HCT116 (cell line): ENCODE measurements at regions of chr16 and their contacts with region 1.

Region 1: DNA sequence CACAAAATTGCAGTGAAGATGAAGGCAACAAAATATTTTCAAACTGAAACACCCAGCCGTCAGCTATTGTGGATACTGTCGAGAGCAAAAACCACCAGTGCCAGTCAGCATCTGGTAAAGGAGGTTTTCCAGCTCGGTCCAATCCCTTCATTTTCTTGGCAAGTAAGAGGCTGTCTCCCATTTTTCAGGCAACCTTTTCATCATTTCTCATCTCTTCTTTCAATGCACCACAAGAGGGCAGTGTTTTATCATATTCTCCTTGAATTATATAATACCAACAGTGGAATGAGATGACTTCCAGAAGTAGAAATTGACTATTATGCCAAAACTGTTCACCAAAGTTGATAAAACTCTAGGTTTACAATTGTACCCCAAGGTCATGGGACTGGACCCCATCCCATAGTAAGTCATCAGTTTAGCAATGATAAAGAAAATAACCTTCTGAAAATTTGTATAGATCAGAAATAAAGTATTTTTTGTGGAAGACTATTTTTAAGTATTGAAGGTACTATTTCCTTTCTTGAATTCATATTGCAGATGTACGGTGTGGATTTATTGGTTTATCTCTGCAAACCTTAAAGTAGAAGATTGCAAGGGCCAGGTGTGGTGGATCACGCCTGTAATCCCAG is 16.8 kb downstream of the NQO1 start:
- DNase-seq: peak; percentile 52
- ATAC-seq: peak; percentile 30
- H3K4me3 ChIP-seq: no peak overlapping the region
- H3K27ac ChIP-seq: peak overlapping the region; percentile 60
- H3K4me1 ChIP-seq: peaks cover 45 to 52% of the 10 kb centered on the region in 2 experiments
- H3K27me3 ChIP-seq: no peaks in the 10 kb centered on the region
- CTCF ChIP-seq: peak; percentile 45 to 75 (median 67); a peak in 4 of 6 replicates
- POLR2A ChIP-seq: no peak
- RAD21 ChIP-seq: peak; percentile 83

Region 2: GRCh38 chr16:69688589-69688988 is 21.0 kb before region 1 on chr16:
- CTCF ChIA-PET with region 1: no interaction called
- POLR2A ChIA-PET with region 1: no interaction called
- RAD21 ChIA-PET with region 1: no interaction called
- intact Hi-C with region 1: no loop called
- DNase-seq: no peak
- ATAC-seq: no peak
- H3K4me3 ChIP-seq: no peak overlapping the region
- H3K27ac ChIP-seq: no peak overlapping the region
- H3K4me1 ChIP-seq: peaks cover 0 to 4% of the 10 kb centered on the region in 2 experiments; a peak in 2 of 4 replicates
- H3K27me3 ChIP-seq: no peaks in the 10 kb centered on the region
- CTCF ChIP-seq: no peak
- POLR2A ChIP-seq: no peak
- RAD21 ChIP-seq: no peak

Region 3: GRCh38 chr16:69754469-69755310 is 45.1 kb after region 1 on chr16 and contains the start of gene NOB1:
- CTCF ChIA-PET with region 1: interaction called, 19 read pairs
- POLR2A ChIA-PET with region 1: no interaction called
- RAD21 ChIA-PET with region 1: no interaction called
- intact Hi-C with region 1: loop called (anchors 1 kb)
- DNase-seq: peak; percentile 93
- ATAC-seq: peak; percentile 96
- H3K4me3 ChIP-seq: peak within 1 kb of the TSS; percentile 91 to 92
- H3K27ac ChIP-seq: peak within 1 kb of the TSS; percentile 76
- H3K4me1 ChIP-seq: peaks cover 7 to 14% of the 10 kb centered on the region in 2 experiments
- H3K27me3 ChIP-seq: no peaks in the 10 kb centered on the region
- CTCF ChIP-seq: peak; percentile 88 to 97 (median 94)
- POLR2A ChIP-seq: peak; percentile 76
- RAD21 ChIP-seq: peak; percentile 98
- total RNA-seq, gene NOB1: 172 TPM

Region 4: DNA sequence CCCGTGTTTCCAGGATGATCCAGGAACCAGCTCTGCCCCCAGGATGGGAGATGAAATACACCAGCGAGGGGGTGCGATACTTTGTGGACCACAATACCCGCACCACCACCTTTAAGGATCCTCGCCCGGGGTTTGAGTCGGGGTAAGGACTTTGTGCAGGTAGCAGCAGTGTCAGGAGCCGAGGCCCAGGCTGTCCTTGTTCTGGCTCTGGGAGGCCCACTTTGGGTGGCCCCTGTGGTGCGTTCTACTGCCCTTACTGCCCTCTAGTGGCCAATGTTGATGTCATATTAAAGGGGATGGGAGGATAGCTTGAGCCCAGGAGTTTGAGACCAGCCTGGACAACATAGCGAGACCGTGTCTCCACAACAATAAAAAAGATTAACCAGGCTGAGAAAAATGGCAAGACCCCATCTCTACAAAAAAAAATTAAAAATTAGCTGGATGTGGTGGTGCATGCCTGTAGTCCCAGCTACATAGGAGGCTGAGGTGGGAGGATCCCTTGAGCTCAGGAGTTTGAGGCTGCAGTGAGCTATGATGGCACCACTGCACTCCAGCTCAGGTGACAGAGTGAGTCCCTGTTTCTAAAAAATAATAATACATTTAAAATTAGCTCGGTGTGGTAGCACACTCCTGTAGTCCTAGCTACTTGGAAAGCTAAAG is 220.7 kb after region 1 on chr16:
- CTCF ChIA-PET with region 1: interaction called, 4 read pairs
- POLR2A ChIA-PET with region 1: no interaction called
- RAD21 ChIA-PET with region 1: no interaction called
- intact Hi-C with region 1: loop called (anchors 1 kb)
- DNase-seq: peak; percentile 40
- ATAC-seq: peak; percentile 96
- H3K4me3 ChIP-seq: no peak overlapping the region
- H3K27ac ChIP-seq: no peak overlapping the region
- H3K4me1 ChIP-seq: no peaks in the 10 kb centered on the region
- H3K27me3 ChIP-seq: no peaks in the 10 kb centered on the region
- CTCF ChIP-seq: peak; percentile 64 to 76 (median 69)
- POLR2A ChIP-seq: no peak
- RAD21 ChIP-seq: peak; percentile 78